IMR-90 (cell line): ENCODE measurements at regions of chr19 and their contacts with region 1.

Region 1: GRCh38 chr19:2415281-2415972 is 12.0 kb downstream of the TIMM13 start:
- DNase-seq: no peak
- ATAC-seq: no peak
- H3K4me3 ChIP-seq: no peak overlapping the region
- H3K27ac ChIP-seq: no peak overlapping the region
- H3K4me1 ChIP-seq: no peaks in the 10 kb centered on the region
- H3K27me3 ChIP-seq: no peaks in the 10 kb centered on the region
- CTCF ChIP-seq: no peak
- POLR2A ChIP-seq: no peak
- RAD21 ChIP-seq: no peak

Region 2: GRCh38 chr19:2446271-2446779 is 30.9 kb after region 1 on chr19:
- CTCF ChIA-PET with region 1: no interaction called
- POLR2A ChIA-PET with region 1: interaction called, 20 read pairs
- dilution Hi-C with region 1: no loop called
- in situ Hi-C with region 1: no loop called
- intact Hi-C with region 1: no loop called
- DNase-seq: no peak
- ATAC-seq: no peak
- H3K4me3 ChIP-seq: no peak overlapping the region
- H3K27ac ChIP-seq: no peak overlapping the region
- H3K4me1 ChIP-seq: no peaks in the 10 kb centered on the region
- H3K27me3 ChIP-seq: no peaks in the 10 kb centered on the region
- CTCF ChIP-seq: no peak
- POLR2A ChIP-seq: no peak
- RAD21 ChIP-seq: no peak